Caco-2 (cell line): ENCODE measurements at regions of chr10 and their contacts with region 1.

Region 1: GRCh38 chr10:23293145-23293724 is 51.4 kb downstream of the C10orf67 start:
- DNase-seq: peak; percentile 58 to 72
- H3K4me3 ChIP-seq: no peak overlapping the region
- H3K4me3 Mint-ChIP-seq: no peak overlapping the region
- H3K27ac Mint-ChIP-seq: no peak overlapping the region
- H3K4me1 ChIP-seq: no peaks in the 10 kb centered on the region
- H3K4me1 Mint-ChIP-seq: no peaks in the 10 kb centered on the region
- H3K27me3 ChIP-seq: no peaks in the 10 kb centered on the region
- H3K27me3 Mint-ChIP-seq: peaks cover 8% of the 10 kb centered on the region
- CTCF ChIP-seq: peak; percentile 63 to 84

Region 2: DNA sequence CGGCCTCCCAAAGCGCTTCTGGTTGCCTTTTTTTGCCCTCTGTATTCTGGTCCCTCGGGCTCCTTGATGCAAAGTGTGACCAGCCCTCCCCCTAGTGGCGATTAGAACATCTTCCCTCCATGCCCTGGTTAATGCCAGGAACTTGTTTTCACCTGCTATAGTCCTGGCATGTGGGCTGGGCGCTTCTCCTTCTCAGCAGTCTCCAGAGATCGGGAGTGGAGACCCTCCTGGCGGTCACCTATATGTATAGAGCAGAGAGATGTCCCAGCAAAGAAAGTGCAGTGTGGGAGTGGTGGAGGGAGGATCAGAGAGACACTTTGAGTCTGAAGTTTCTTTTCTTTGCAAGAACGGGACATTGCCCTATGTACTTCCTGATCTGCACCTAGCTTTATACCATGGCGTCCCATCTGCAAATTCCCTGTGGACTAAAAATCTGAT is 409.8 kb after region 1 on chr10:
- CTCF ChIA-PET with region 1: no interaction called
- POLR2A ChIA-PET with region 1: no interaction called
- intact Hi-C with region 1: loop called (anchors 2 kb)
- DNase-seq: peak; percentile 78
- H3K4me3 ChIP-seq: no peak overlapping the region
- H3K4me3 Mint-ChIP-seq: no peak overlapping the region
- H3K27ac Mint-ChIP-seq: no peak overlapping the region
- H3K4me1 ChIP-seq: no peaks in the 10 kb centered on the region
- H3K4me1 Mint-ChIP-seq: no peaks in the 10 kb centered on the region
- H3K27me3 ChIP-seq: no peaks in the 10 kb centered on the region
- H3K27me3 Mint-ChIP-seq: peaks cover 15% of the 10 kb centered on the region
- CTCF ChIP-seq: peak; percentile 92 to 95